HEK293 (cell line): ENCODE measurements at regions of chr7 and their contacts with region 1.

Region 1: DNA sequence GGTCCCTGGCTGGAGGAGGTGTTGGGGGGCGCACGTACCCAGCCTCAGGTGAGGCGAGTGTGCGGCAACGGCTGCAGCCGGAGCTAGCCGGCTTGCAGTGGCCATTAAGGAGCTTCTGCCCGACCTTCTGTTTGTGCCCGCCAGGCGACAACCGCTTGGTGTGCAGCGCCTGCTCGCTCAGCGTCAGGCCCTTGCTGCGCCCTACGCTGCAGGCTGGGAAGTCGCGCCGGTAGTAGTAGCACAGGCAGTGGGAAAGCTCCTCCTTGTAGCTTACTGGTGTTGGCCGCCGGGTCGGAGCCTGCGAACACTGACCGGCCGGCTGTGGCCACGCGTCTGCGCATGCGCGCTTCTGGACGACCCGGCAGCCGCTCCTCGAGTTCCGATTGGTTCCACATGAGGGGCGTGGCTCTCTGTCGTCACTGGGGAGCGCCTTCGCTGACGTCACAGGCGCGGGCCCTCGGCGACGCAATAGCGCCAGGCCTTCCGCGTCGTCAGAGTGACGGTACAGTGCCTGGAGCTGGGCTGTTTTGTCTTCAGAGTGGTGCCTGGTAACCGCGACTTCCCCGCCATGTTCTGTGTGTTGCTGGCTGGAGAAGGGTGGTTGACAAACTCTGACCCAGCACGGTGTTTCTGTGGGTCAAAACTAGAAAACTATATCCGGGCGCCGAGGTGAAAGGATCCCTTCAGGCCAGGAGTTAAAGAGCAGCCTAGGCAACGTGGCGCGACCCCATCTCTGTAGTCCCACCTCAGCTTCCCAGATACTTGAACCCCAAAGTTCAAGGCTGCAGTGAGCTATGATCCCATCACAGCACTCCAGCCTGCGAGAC is 76.3 kb upstream of the TMEM248 start:
- H3K4me3 ChIP-seq: peak overlapping the region; percentile 63
- H3K27ac ChIP-seq: peak overlapping the region; percentile 50
- H3K4me1 ChIP-seq: no peaks in the 10 kb centered on the region
- CTCF ChIP-seq: 0 out of 2 replicates have a peak, but pooled peaks have one; percentile 10

Region 2: GRCh38 chr7:66740302-66740979 is 104.3 kb before region 1 on chr7 and contains the start of gene RABGEF1:
- CTCF ChIA-PET with region 1: no interaction called
- POLR2A ChIA-PET with region 1: interaction called, 12 read pairs
- H3K4me3 ChIP-seq: peak within 1 kb of the TSS; percentile 97
- H3K27ac ChIP-seq: peak within 1 kb of the TSS; percentile 84
- H3K4me1 ChIP-seq: no peaks in the 10 kb centered on the region
- CTCF ChIP-seq: 0 out of 2 replicates have a peak, but pooled peaks have one; percentile 14

Region 3: DNA sequence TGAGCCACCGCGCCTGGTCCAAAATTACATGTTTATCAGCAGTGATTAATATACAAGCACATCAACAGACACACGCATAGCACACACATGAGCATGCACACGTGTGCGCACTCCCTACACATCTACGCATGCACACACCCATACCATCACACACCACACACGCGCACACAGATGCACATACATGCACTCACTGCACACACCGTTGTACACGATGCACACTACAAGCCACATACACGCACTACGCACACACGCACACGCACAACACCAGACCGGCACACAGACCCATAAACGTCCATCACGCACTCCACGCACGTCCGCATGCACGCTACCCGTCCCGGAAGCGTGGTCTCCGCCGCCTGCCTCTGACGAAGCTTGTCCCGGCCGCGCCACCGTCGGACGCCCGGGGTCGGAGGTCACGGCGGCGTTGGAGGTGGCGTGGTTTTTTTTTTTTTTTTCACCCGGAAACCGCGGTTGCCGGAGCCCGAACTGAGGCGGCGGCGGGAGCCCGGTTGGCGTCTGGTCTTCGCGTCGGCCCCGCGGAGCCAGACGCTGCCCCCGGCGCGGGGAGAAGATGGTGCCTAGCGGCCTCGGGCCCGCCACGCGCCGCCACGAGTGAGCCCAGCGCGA is 76.1 kb after region 1 on chr7 and contains the start of gene TMEM248:
- CTCF ChIA-PET with region 1: no interaction called
- POLR2A ChIA-PET with region 1: interaction called, 10 read pairs
- H3K4me3 ChIP-seq: peak within 1 kb of the TSS; percentile 83
- H3K27ac ChIP-seq: peak within 1 kb of the TSS; percentile 84
- H3K4me1 ChIP-seq: peaks cover 2% of the 10 kb centered on the region; the same call in 1 of the 2 replicates
- CTCF ChIP-seq: peak; percentile 34; the same call in 1 of the 2 replicates